Ovary (tissue), 10 donors: ENCODE measurements at regions of chr5 and their contacts with region 1.

Region 1: GRCh38 chr5:150589871-150590601 is 50.4 kb upstream of the SYNPO start:
- DNase-seq: peak; percentile 89 to 92 (median 90)
- H3K4me3 ChIP-seq: no peak overlapping the region
- H3K27ac ChIP-seq: peak overlapping the region; percentile 62 to 81
- H3K4me1 ChIP-seq: peaks cover 23% of the 10 kb centered on the region
- H3K27me3 ChIP-seq: no peaks in the 10 kb centered on the region
- CTCF ChIP-seq: peak; percentile 64 to 95 (median 92)
- EP300 ChIP-seq: no peak
- POLR2A ChIP-seq: no peak

Region 2: GRCh38 chr5:151252762-151253604 is 662.9 kb after region 1 on chr5 and contains the start of gene GM2A:
- intact Hi-C with region 1: loop called in 1 of 4 experiments (anchors 5 kb)
- DNase-seq: peak; percentile 99
- H3K4me3 ChIP-seq: peak within 1 kb of the TSS; percentile 71
- H3K27ac ChIP-seq: peak within 1 kb of the TSS in 1 of 2 donors; percentile 51
- H3K4me1 ChIP-seq: peaks cover 4% of the 10 kb centered on the region
- H3K27me3 ChIP-seq: no peaks in the 10 kb centered on the region
- CTCF ChIP-seq: no peak
- EP300 ChIP-seq: peak; percentile 46
- POLR2A ChIP-seq: peak; percentile 16
- total RNA-seq, gene GM2A: 14.7 to 38.5 (median 28.6) TPM